Activated CD8-positive, alpha-beta T cell treated with anti-CD3 and anti-CD28 coated beads, Interleukin-2, amount 10 ng/mL, durations not matched to agents 7 days and 5 days (primary cell): ENCODE measurements at regions of chr1 and their contacts with region 1.

Region 1: GRCh38 chr1:226679853-226680516 is 59.1 kb downstream of the ITPKB start:
- DNase-seq: peak; percentile 82
- ATAC-seq: peak; percentile 31
- H3K4me3 Mint-ChIP-seq: peak overlapping the region; percentile 67
- H3K27ac Mint-ChIP-seq: peak overlapping the region; percentile 86
- H3K4me1 Mint-ChIP-seq: peaks cover 88% of the 10 kb centered on the region
- H3K27me3 Mint-ChIP-seq: no peaks in the 10 kb centered on the region

Region 2: DNA sequence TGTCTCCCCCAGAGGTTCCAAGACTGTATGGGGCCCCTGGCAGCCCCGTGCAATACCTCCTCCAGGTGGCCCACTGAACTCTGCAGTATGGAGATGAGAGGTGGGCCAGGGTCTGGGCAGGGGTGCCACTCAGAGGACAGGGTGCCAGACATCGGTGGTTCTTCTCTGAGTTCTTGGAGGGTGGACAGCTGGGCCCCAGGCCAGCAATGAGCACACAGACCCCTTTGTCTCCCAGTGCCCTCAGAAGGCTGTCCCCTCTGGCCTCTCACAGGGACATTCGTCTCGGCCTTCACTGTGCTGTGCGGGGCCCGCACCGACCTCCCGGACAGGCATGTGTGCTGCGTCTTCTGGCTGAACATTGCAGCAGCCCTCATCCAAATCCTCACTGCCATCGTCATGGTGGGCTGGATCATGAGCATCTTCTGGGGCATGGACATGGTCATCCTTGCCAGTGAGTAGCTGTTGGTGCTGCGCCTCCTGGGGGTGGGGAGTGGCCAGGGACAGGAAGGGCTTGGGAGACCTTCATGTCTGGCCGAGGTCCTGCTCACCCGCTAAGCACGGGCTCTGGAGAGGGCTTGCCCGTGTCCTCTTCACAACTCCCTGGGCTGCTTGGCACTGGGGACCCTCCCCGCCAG is 83.3 kb before region 1 on chr1:
- CTCF ChIA-PET with region 1: no interaction called
- POLR2A ChIA-PET with region 1: no interaction called
- DNase-seq: no peak
- ATAC-seq: no peak
- H3K4me3 Mint-ChIP-seq: no peak overlapping the region
- H3K27ac Mint-ChIP-seq: no peak overlapping the region
- H3K4me1 Mint-ChIP-seq: no peaks in the 10 kb centered on the region
- H3K27me3 Mint-ChIP-seq: peaks cover 9% of the 10 kb centered on the region

Region 3: GRCh38 chr1:226609836-226610455 is 70.0 kb before region 1 on chr1:
- CTCF ChIA-PET with region 1: no interaction called
- POLR2A ChIA-PET with region 1: no interaction called
- DNase-seq: no peak
- ATAC-seq: no peak
- H3K4me3 Mint-ChIP-seq: no peak overlapping the region
- H3K27ac Mint-ChIP-seq: no peak overlapping the region
- H3K4me1 Mint-ChIP-seq: no peaks in the 10 kb centered on the region
- H3K27me3 Mint-ChIP-seq: peaks cover 3% of the 10 kb centered on the region

Region 4: DNA sequence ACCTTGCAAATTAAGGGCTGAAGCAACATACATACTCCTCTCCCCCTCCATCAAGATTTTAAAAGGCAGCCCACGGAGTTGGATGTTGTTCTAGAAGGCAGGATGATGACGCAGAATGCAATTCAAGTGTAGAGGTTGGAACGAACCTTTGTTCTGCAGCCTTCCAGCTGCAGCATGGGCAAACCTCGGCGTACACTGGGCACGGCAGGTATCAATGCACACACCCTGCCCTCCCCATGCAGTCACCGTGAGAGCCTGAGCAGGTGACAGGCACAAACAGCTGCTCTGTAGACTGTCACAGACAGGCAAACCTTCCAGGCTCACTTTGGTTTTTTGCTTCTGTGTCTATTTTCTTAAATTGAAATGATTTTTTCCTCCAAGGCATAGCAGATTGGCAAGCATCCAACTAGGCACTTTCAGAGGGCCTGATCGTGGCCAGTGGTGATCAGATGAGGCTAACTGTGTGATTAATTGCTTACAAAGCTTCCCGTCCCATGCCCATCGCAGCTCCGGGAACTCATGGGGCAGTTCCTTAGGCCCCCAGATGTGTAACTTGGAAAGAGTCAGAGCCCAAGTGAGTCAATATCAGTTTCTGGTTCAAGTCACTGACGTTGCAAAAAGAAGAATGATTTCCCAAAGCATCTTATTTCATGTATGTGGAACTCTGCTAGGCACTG is 23.2 kb before region 1 on chr1:
- CTCF ChIA-PET with region 1: interaction called, 13 read pairs
- POLR2A ChIA-PET with region 1: interaction called, 40 read pairs
- DNase-seq: no peak
- ATAC-seq: no peak
- H3K4me3 Mint-ChIP-seq: no peak overlapping the region
- H3K27ac Mint-ChIP-seq: peak overlapping the region; percentile 97
- H3K4me1 Mint-ChIP-seq: peaks cover 28% of the 10 kb centered on the region
- H3K27me3 Mint-ChIP-seq: no peaks in the 10 kb centered on the region

Region 5: DNA sequence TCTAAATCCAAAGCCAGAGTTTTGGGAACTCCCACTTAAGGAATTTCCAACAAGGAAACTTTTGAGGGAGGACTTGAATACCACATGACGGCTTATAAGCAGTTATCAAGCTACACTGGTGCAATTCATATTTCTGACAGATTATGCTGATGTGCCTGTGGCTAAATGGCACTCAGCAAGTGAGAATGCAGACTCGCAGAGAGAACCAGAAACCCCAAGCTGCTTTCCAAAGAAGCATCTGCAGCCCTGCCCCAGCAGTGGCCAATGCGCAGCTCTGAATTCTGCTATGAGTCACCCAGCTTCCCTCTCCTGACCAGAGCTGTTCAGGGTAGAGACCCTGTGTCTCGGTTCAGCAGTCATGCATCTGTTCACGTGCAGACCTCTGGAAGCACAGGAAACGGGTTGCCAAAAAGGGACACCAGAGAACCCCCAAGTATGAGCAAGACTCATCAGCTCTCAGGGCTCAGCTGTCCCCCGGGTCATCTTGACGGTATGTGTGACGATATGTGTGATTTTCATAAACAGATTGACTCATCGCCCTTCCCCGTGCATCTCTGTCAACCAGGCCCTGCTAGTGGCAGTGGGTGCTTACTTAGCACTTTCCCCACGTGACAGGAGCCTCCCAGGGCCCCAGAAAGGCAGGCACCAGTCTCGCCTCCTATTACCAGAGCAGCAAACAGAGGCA is 17.2 kb before region 1 on chr1:
- CTCF ChIA-PET with region 1: interaction called, 13 read pairs
- POLR2A ChIA-PET with region 1: interaction called, 17 read pairs
- DNase-seq: peak; percentile 89
- ATAC-seq: peak; percentile 87
- H3K4me3 Mint-ChIP-seq: peak overlapping the region; percentile 54
- H3K27ac Mint-ChIP-seq: peak overlapping the region; percentile 92
- H3K4me1 Mint-ChIP-seq: peaks cover 89% of the 10 kb centered on the region
- H3K27me3 Mint-ChIP-seq: no peaks in the 10 kb centered on the region

Region 6: GRCh38 chr1:226702957-226703831 is 23.2 kb after region 1 on chr1:
- CTCF ChIA-PET with region 1: interaction called, 3 read pairs
- POLR2A ChIA-PET with region 1: interaction called, 17 read pairs
- DNase-seq: peak; percentile 77
- ATAC-seq: peak; percentile 82
- H3K4me3 Mint-ChIP-seq: peak overlapping the region; percentile 71
- H3K27ac Mint-ChIP-seq: peak overlapping the region; percentile 77
- H3K4me1 Mint-ChIP-seq: peaks cover 59% of the 10 kb centered on the region
- H3K27me3 Mint-ChIP-seq: no peaks in the 10 kb centered on the region